Ascending aorta (tissue), 2 donors: ENCODE measurements at regions of chr1 and their contacts with region 1.

Region 1: DNA sequence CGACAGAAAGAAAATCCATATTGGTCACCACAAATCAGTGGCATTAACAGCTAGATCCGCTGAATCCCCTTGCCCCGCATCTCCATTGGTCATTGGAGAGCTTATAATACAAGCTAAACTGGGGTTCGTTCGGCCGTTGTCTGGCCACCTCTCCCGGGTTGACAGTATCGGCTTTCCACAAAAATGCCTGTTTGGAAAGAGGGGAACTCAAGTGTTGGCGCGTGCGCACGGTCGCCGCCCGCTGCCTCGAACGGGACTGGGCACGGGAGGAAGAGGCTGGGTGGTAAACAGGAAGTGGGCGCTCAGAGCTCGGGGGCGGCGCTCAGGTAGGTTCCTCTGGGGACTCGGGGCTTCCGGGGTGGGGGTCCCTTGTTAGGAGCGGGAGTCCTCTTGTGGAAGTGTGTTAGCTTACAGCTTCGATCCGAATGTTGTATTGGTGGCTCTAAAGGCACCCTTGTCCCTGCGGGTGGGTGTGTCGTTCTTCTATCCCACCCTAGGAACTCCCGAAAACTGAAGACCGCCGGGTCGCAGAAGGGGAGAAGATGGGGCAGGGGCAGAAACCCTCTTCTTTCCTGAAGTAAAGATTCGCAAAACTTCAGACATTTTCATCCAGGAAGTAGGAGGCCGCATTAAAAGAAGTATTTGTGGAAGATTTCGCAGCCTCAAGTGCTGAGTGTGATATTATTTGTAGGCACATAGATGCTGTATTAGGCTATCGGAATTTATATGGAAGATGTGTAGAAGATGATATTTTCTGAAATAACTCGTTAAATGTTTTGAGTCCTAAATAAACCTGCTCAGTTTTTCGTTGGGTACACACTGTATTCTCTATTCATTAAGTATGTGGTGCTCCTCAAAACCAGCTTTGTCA is 962 bp downstream of the BROX start:
- DNase-seq: peak; percentile 87 to 96
- H3K4me3 ChIP-seq: peak overlapping the region; percentile 80 to 89
- H3K27ac ChIP-seq: peak overlapping the region; percentile 96 to 99
- H3K4me1 ChIP-seq: peaks cover 0 to 15% of the 10 kb centered on the region in 2 donors
- H3K27me3 ChIP-seq: no peaks in the 10 kb centered on the region
- CTCF ChIP-seq: no peak

Region 2: DNA sequence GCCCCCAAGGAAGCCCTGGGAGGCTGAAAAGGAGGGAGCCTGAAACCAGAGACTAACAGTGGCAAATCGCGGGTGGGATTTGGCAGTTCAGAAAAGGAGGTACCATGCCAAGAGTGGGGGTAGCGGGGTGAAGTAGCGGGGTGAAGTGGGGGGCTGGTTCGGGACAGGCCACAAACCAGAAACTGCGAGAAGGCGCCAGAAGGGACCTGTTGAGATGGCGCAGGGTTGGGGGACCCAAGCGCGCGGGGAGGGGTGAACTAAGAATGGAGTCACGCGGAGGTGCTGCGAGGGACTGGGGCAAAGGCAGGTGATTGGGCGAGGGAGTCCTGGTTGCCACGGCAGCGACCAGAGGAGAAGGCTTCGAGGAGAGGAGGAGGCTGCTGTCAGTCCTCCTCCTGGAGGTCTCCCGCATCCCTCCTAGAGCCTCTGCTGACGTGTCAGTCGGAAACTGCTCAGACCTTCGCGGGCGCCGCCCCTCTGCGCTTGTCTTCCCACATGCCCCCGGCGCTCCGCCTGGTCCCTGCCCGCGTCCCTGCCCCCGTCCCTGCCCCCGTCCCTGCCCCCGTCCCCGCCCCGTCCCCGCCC is 95.9 kb before region 1 on chr1:
- intact Hi-C with region 1: loop called (anchors 1 kb)
- DNase-seq: peak; percentile 84 to 97
- H3K4me3 ChIP-seq: peak overlapping the region; percentile 62 to 68
- H3K27ac ChIP-seq: peak overlapping the region; percentile 43 to 78
- H3K4me1 ChIP-seq: no peaks in the 10 kb centered on the region
- H3K27me3 ChIP-seq: no peaks in the 10 kb centered on the region
- CTCF ChIP-seq: no peak

Region 3: GRCh38 chr1:222643938-222644635 is 69.2 kb before region 1 on chr1:
- intact Hi-C with region 1: loop called (anchors 1 kb)
- DNase-seq: peak; percentile 97 to 99
- H3K4me3 ChIP-seq: peak overlapping the region; percentile 83
- H3K27ac ChIP-seq: peak overlapping the region; percentile 89 to 98
- H3K4me1 ChIP-seq: peaks cover 0 to 11% of the 10 kb centered on the region in 2 donors
- H3K27me3 ChIP-seq: no peaks in the 10 kb centered on the region
- CTCF ChIP-seq: no peak

Region 4: GRCh38 chr1:222754366-222755139 is 41.2 kb after region 1 on chr1:
- intact Hi-C with region 1: loop called (anchors 2 kb)
- DNase-seq: peak; percentile 53 to 81
- H3K4me3 ChIP-seq: peak overlapping the region in 1 of 2 donors; percentile 28
- H3K27ac ChIP-seq: peak overlapping the region; percentile 64 to 77
- H3K4me1 ChIP-seq: peaks cover 0 to 4% of the 10 kb centered on the region in 2 donors
- H3K27me3 ChIP-seq: no peaks in the 10 kb centered on the region
- CTCF ChIP-seq: no peak